ENCODE measurements at regions of chr12 and their contacts with region 1.

Region 1: DNA sequence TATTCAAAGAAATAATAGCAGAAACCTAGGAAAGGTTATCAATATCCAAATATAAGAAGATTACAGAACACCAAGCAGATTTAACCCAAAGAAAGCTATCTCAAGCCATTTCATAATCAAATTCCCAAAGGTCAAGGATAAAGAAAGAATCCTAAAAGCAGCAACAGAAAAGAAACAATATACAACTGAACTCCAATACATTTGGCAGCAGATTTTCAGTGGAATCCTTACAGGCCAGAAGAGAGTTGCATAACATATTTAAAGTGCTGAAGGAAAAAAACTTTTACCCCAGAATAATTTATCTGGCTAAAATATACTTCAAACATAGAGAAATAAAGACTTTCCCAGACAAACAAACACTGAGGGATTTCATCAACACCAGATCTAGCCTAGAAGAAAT is 54.3 kb downstream of the DENND5B start:
- DNase-seq: no peak
- ATAC-seq: no peak
- H3K4me3 ChIP-seq: no peak overlapping the region
- H3K27ac ChIP-seq: no peak overlapping the region
- H3K4me1 ChIP-seq: peaks cover 0 to 42% (median 9%) of the 10 kb centered on the region in 12 donors
- H3K27me3 ChIP-seq: no peaks in the 10 kb centered on the region
- CTCF ChIP-seq: no peak
- POLR2A ChIP-seq: no peak

Region 2: DNA sequence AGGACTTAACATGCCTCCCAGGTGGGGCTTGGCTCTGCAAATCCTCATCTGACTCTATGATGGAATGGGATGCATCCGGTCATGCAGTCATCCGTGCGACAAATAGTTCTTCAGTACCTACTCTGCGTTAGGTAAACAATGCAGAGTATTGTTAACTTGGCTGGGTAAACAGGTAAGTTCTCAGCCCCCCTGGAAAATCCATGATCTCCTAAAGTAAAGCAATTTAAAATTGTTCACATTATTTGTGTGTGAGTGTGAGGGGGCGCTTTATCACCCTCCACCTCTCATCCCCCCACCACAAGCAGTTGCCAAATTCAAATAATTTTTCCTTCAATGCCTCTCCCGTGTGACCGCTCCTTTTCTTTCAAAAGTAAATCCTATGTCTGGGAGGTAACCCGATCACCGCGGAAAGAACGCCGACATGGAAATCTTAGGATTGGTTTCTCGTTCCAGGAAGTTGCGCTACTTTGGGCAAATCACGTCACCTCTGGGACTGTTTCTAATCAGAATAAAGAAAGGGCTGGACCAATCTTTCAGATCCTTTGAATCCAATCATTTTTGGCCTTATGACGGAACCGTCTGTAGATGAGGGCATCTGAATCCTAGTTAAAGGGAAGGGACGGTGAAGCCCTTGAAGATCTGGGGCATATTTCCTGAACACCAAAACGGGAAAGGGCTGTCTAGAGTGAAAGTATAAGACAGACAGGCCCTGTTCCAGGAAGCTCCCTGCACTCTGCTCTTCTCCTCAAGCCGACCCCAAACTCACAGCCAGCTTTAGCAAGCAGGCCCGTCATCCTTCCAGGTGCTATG is 166.8 kb before region 1 on chr12:
- intact Hi-C with region 1: no loop called
- DNase-seq: peak in 4 of 5 donors; percentile 31 to 37 (median 32)
- ATAC-seq: peak; percentile 47 to 81 (median 68)
- H3K4me3 ChIP-seq: peak overlapping the region in 10 of 12 donors; percentile 33 to 52 (median 41)
- H3K27ac ChIP-seq: peak overlapping the region in 1 of 12 donors; percentile 17
- H3K4me1 ChIP-seq: peaks cover 0 to 20% (median 8%) of the 10 kb centered on the region in 12 donors
- H3K27me3 ChIP-seq: no peaks in the 10 kb centered on the region
- CTCF ChIP-seq: no peak
- POLR2A ChIP-seq: no peak

Region 3: GRCh38 chr12:31504625-31505222 is 31.9 kb before region 1 on chr12:
- intact Hi-C with region 1: loop called in 1 of 10 experiments (anchors 5 kb)
- DNase-seq: no peak
- ATAC-seq: no peak
- H3K4me3 ChIP-seq: no peak overlapping the region
- H3K27ac ChIP-seq: no peak overlapping the region
- H3K4me1 ChIP-seq: peaks cover 0 to 18% (median 5%) of the 10 kb centered on the region in 12 donors
- H3K27me3 ChIP-seq: no peaks in the 10 kb centered on the region
- CTCF ChIP-seq: no peak
- POLR2A ChIP-seq: no peak

Measured in heart left ventricle (tissue), 16 donors.